MCF 10A (cell line): ENCODE measurements at regions of chr18 and their contacts with region 1.

Region 1: DNA sequence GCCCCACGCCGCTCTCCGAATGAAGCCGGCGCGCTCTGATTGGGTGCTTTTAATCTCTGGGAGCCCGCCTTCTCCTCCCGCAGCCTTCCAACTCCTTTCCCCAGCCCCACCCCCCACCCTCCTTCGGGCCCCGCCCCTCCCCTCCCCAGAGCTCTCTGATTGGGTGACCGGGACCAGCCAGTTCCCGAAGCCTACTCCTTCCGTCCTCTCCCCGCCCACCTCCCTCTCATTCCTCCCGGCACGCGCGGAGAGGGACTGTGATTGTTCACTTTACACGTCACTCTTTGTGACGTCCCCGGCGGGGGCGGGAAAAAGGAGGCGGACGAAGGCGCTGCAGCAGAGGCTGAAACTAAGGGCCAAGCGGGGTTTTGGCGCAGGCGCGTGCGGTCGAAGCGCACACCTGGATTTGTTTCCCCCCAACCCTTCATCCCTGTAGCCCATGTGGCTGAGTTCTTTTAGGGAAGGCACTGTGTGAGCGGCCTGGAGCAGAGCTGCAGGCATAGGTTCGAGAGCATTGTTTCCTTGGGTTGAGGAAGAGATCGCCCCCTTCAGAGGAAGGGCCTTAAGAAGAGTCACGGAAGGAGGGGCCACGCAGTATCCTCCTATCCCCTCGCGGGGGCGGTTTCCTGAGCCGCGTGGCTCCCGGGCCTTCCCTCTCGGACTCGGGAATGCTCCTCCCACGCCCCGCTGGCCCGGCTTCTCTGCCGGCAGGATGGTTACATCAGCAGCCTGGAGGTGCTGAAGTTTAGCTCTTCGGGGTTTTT is at the start of gene MEX3C:
- DNase-seq: peak; percentile 100
- H3K4me3 Mint-ChIP-seq: peak within 1 kb of the TSS; percentile 69
- H3K27ac Mint-ChIP-seq: peak within 1 kb of the TSS; percentile 92
- H3K4me1 Mint-ChIP-seq: peaks cover 18% of the 10 kb centered on the region
- H3K27me3 Mint-ChIP-seq: no peaks in the 10 kb centered on the region
- CTCF ChIP-seq: no peak
- total RNA-seq, gene MEX3C: 65.3 and 81.9 TPM in 2 replicates

Region 2: DNA sequence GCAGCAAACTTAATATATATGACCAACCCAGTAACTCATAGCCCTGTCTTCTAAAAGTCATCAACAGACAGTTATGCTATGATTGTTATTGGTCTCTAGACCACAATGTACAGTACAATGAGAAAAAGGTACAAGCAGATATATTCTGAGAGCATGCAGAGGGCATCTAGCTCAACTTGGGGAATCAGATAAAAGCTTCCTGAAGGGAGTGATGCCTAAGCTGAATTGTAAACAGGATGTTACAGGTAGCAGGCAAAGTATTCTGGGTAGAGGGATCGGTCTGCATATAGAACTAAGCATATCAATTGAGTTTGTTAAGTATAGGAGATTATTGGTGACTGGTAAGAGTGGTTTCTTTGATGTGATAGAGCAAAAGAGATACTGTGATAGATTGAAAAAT is 288.6 kb before region 1 on chr18:
- CTCF ChIA-PET with region 1: no interaction called
- POLR2A ChIA-PET with region 1: no interaction called
- intact Hi-C with region 1: no loop called
- DNase-seq: no peak
- H3K4me3 Mint-ChIP-seq: no peak overlapping the region
- H3K27ac Mint-ChIP-seq: no peak overlapping the region
- H3K4me1 Mint-ChIP-seq: no peaks in the 10 kb centered on the region
- H3K27me3 Mint-ChIP-seq: no peaks in the 10 kb centered on the region
- CTCF ChIP-seq: no peak

Region 3: GRCh38 chr18:51135795-51136194 is 62.0 kb before region 1 on chr18:
- CTCF ChIA-PET with region 1: interaction called, 38 read pairs
- POLR2A ChIA-PET with region 1: interaction called, 262 read pairs
- intact Hi-C with region 1: loop called (anchors 1 kb)
- DNase-seq: peak; percentile 48
- H3K4me3 Mint-ChIP-seq: peak overlapping the region; percentile 85
- H3K27ac Mint-ChIP-seq: peak overlapping the region; percentile 97
- H3K4me1 Mint-ChIP-seq: peaks cover 45% of the 10 kb centered on the region
- H3K27me3 Mint-ChIP-seq: no peaks in the 10 kb centered on the region
- CTCF ChIP-seq: no peak

Region 4: GRCh38 chr18:51182824-51183223 is 15.0 kb before region 1 on chr18:
- CTCF ChIA-PET with region 1: interaction called, 5 read pairs
- POLR2A ChIA-PET with region 1: interaction called, 13 read pairs
- intact Hi-C with region 1: no loop called
- DNase-seq: no peak
- H3K4me3 Mint-ChIP-seq: no peak overlapping the region
- H3K27ac Mint-ChIP-seq: no peak overlapping the region
- H3K4me1 Mint-ChIP-seq: peaks cover 35% of the 10 kb centered on the region
- H3K27me3 Mint-ChIP-seq: no peaks in the 10 kb centered on the region
- CTCF ChIP-seq: no peak

Region 5: GRCh38 chr18:51383116-51383515 is 185.3 kb after region 1 on chr18:
- CTCF ChIA-PET with region 1: no interaction called
- POLR2A ChIA-PET with region 1: interaction called, 3 read pairs
- intact Hi-C with region 1: loop called (anchors 5 kb)
- DNase-seq: no peak
- H3K4me3 Mint-ChIP-seq: no peak overlapping the region
- H3K27ac Mint-ChIP-seq: no peak overlapping the region
- H3K4me1 Mint-ChIP-seq: peaks cover 4% of the 10 kb centered on the region
- H3K27me3 Mint-ChIP-seq: no peaks in the 10 kb centered on the region
- CTCF ChIP-seq: no peak